Activated naive CD4-positive, alpha-beta T cell treated with anti-CD3 and anti-CD28 coated beads for 36 hours (primary cell): ENCODE measurements at regions of chr1 and their contacts with region 1.

Region 1: DNA sequence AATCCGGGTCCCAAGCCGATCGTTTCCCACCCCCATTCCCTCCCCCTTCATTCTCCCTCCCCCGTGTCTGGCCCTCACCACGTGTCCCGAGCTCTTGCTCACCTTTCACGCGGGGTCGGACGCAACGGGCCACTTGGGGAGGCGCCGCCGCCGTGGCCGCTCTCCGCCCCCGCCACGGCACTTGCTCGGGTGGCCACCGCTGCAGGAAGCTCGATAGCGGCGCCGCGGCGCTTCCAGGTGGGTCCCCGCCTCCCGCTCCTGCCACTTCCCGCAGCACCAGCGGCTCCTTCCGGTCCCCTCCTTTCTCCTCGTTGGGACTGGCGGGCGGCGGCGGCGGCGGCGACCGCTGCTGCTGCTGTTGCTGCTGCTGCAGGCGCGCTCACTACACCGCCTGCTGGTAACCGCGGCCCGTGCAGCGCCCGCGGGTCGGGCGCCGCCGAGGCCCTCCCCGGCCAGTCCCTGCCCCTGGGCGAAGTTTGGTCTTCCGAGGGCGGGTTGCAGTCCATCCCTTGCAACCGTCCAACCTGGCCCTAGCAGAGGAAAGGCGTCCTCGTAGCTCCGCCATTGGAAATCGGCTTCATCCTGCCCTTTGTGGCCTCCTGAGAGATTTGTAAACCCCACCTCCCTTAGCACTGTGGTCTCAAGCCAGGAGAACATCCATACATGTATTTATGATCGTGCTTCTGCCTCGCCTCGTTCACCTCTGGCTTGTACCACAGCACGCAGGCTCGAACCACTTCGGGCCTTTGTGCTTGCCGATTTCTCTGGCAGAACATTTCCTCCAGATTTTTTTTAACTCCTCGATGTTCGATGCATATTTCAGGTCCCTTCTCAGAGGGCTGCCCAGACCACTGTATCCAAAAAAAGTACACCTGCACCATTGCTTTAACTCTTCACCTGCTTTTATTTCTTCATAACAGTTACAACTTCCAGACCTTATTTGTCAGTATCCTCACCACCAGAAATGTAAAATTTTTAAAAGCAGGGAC is 996 bp upstream of the ZZZ3 start:
- DNase-seq: peak; percentile 94
- H3K4me3 Mint-ChIP-seq: peak overlapping the region; percentile 82
- H3K27ac Mint-ChIP-seq: peak overlapping the region; percentile 90
- H3K4me1 Mint-ChIP-seq: peaks cover 30% of the 10 kb centered on the region
- H3K27me3 Mint-ChIP-seq: no peaks in the 10 kb centered on the region

Region 2: DNA sequence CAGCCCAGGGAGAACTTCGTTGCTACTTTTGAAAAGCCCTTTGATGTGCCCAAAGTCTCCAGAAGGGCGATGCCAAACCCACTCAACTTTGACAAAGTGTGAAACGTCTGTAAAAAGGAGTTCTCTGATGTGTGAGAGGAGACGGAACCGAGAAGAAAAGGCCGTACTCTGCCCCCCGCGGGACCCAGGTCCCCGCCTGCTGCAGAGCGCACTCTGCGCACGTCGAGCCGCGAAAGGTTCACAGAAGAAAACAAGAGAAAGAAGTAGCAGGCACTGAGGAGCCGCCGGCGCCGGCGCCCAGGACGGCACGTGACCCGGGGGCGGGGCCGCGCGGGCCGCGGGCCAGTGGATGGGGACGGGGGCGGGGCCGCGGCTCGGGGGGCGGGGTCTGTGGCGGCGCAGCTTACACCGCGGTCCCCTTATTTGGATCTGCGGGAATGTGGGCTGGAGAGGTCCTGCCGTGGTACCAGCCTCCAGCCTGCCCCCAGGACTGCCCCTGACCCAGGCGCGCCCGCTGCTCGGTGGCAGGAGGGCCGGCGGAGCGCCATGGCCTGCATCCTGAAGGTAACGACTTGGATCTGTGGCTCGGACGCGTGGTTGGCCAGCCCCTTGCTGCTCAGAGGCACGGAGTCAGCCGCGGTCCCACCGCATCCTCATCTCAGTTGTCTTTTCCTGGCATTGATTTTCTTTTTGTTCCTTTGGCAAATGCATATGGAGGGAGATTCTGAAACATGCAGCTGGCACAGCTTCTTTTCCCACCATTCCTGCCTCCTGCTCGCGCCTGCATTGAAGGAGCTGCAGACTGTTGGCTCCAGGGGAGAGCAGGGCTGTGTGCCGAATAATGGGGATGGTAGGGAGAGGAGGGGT is 1608.9 kb before region 1 on chr1 and contains the start of gene ST6GALNAC3:
- CTCF ChIA-PET with region 1: no interaction called
- intact Hi-C with region 1: loop called (anchors 10 kb)
- DNase-seq: peak; percentile 78
- H3K4me3 Mint-ChIP-seq: peak within 1 kb of the TSS; percentile 83
- H3K27ac Mint-ChIP-seq: no peak within 1 kb of the TSS
- H3K4me1 Mint-ChIP-seq: peaks cover 25% of the 10 kb centered on the region
- H3K27me3 Mint-ChIP-seq: no peaks in the 10 kb centered on the region
- total RNA-seq, gene ST6GALNAC3: 2.5 to 2.8 TPM

Region 3: DNA sequence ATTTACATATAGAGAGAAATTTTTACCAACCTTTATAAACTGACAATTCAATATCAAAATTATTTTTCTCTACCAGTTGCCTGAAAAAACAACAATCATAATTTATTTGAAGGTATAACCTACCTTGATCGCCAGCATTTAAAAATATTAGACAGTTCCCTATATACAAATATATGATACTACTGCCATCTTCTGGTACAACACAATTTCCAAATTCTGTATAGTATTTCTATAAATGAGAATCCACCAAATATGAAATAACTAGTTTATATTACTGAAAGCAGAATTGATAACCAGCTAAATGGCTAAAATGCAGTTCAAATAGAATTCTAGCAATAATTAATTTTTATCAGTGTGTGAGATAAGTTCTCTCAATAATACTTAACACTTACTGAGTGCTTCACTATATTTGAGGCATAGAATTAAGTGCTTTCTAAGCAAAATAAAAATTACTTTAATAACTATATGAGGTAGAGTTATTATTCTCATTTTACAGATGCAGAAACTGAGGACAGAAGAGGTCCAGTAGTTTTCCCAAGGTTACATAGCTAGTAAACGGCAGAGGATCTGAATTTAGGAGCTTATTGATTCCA is 539.8 kb before region 1 on chr1:
- CTCF ChIA-PET with region 1: no interaction called
- intact Hi-C with region 1: loop called (anchors 2 kb)
- DNase-seq: no peak
- H3K4me3 Mint-ChIP-seq: no peak overlapping the region
- H3K27ac Mint-ChIP-seq: no peak overlapping the region
- H3K4me1 Mint-ChIP-seq: peaks cover 2% of the 10 kb centered on the region
- H3K27me3 Mint-ChIP-seq: no peaks in the 10 kb centered on the region

Region 4: DNA sequence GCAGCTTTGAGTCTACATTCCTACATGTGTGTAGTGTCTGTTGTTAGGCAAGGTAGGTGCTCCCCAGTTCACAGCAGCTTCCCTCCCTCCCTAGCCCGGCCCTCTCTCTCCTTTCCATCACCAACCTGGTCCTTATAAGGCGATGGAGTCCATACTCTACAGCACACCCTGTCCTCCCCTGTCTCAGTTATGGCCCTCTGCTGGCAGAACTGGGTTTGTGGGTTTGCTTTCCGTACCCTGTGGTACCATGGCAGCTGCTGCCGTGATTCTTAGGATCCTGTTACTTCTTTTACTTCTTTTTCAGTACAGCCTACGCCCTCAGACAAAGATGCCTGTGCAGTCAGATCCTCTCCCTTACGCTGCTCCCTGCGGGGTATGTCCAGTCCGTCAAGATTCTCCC is 370.0 kb before region 1 on chr1:
- CTCF ChIA-PET with region 1: no interaction called
- intact Hi-C with region 1: loop called (anchors 2 kb)
- DNase-seq: peak; percentile 59
- H3K4me3 Mint-ChIP-seq: no peak overlapping the region
- H3K27ac Mint-ChIP-seq: no peak overlapping the region
- H3K4me1 Mint-ChIP-seq: peaks cover 37% of the 10 kb centered on the region
- H3K27me3 Mint-ChIP-seq: no peaks in the 10 kb centered on the region

Region 5: GRCh38 chr1:77779529-77780281 is 96.3 kb after region 1 on chr1 and contains the start of gene MIGA1:
- CTCF ChIA-PET with region 1: interaction called, 4 read pairs
- intact Hi-C with region 1: loop called (anchors 1 kb)
- DNase-seq: peak; percentile 90
- H3K4me3 Mint-ChIP-seq: peak within 1 kb of the TSS; percentile 88
- H3K27ac Mint-ChIP-seq: peak within 1 kb of the TSS; percentile 85
- H3K4me1 Mint-ChIP-seq: peaks cover 34% of the 10 kb centered on the region
- H3K27me3 Mint-ChIP-seq: no peaks in the 10 kb centered on the region
- total RNA-seq, gene MIGA1: 7.7 to 8.8 TPM

Region 6: DNA sequence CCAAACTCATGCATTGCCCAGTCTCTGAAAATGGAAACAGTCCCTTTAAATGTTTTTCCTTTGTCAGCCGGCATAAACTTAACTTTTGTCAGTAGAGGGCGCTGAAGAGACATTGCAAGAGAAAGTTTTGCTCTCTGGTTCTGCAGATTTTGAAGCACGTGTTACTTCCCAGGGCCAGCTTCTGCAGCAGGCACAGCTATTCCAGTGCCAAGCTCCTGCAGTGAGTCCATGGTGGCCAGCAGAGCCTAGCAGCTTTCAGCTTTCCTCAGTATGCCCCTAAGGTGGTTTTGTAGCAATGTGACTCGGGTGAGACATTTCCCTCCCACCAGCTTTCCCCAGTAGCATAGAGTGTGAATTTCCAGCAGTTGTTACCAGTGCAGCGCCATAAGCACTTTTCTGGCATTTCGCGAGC is 934.2 kb after region 1 on chr1:
- CTCF ChIA-PET with region 1: no interaction called
- intact Hi-C with region 1: loop called (anchors 1 kb)
- DNase-seq: peak; percentile 66
- H3K4me3 Mint-ChIP-seq: no peak overlapping the region
- H3K27ac Mint-ChIP-seq: no peak overlapping the region
- H3K4me1 Mint-ChIP-seq: peaks cover 30% of the 10 kb centered on the region
- H3K27me3 Mint-ChIP-seq: no peaks in the 10 kb centered on the region